H1 (cell line): ENCODE measurements at regions of chrX and their contacts with region 1.

Region 1: DNA sequence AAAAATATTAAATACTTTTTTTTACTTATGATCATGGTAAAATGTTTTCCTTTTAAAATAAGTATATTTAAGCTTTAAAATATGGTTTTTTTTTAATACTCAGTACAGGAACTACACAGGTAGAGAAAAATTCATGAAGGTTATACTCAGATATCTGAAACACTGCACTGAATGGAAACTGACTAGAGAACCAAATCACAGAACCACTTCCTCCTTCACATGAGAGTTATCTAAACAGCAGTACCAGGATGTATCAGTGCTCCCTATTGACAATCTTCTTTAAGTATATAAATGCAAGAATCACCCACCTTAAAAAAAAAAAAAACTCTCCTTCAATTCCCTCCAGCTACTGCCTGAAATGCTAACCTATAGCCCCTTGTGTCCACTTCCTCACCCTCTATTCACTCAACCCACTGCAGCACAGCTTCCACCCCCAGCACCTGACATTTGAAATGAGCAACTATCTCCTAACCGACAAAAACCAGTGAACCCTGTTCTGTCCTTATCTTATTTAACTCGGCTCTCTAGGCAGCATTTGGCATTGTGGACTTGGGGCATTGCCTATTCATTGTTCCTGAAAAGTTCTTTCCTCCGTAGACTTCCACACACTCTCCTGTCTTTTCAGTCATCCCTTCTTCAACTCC is 9.1 kb downstream of the SLC7A3 start:
- DNase-seq: no peak
- H3K4me3 ChIP-seq: peak overlapping the region in 1 of 4 experiments; percentile 32; a peak in 1 of 8 replicates
- H3K27ac ChIP-seq: peak overlapping the region; percentile 54; the same call in 1 of the 2 replicates
- H3K4me1 ChIP-seq: peaks cover 0 to 3% (median 1%) of the 10 kb centered on the region in 4 experiments; a peak in 4 of 7 replicates
- H3K27me3 ChIP-seq: no peaks in the 10 kb centered on the region
- CTCF ChIP-seq: no peak
- EP300 ChIP-seq: no peak
- POLR2A ChIP-seq: no peak
- RAD21 ChIP-seq: no peak

Region 2: DNA sequence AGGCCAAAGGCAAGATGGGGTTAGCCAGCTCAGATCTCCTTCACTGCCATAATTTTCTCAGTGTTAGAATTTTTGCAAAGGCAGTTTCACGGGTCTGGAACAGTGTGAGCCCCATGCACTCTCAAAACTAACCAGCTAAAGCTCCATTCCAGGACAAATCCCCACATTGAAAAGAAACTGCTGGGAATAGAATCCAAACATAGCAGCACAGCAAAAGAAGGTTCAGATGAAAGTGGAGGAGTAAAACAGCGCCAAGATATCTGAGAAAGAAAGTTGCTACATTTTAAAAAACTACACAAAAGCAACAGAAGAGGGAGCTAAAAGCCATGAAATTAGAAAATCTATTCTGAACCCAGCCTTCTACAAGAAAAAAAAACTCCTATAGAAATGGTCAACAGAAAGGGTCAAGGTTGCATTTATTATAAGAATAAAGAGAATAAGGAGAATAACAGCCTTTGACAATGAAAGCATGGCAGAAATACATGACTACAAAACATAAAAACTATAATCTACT is 48.7 kb after region 1 on chrX:
- CTCF ChIA-PET with region 1: interaction called, 5 read pairs
- POLR2A ChIA-PET with region 1: interaction called, 11 read pairs
- DNase-seq: no peak
- H3K4me3 ChIP-seq: peak overlapping the region in 1 of 4 experiments; percentile 50; a peak in 2 of 8 replicates
- H3K27ac ChIP-seq: peak overlapping the region; percentile 50; the same call in 1 of the 2 replicates
- H3K4me1 ChIP-seq: no peaks in the 10 kb centered on the region; a peak in 1 of 7 replicates
- H3K27me3 ChIP-seq: no peaks in the 10 kb centered on the region
- CTCF ChIP-seq: no peak; a peak in 1 of 4 replicates
- EP300 ChIP-seq: no peak
- POLR2A ChIP-seq: no peak
- RAD21 ChIP-seq: peak in 1 of 2 experiments; percentile 21; a peak in 2 of 4 replicates

Region 3: DNA sequence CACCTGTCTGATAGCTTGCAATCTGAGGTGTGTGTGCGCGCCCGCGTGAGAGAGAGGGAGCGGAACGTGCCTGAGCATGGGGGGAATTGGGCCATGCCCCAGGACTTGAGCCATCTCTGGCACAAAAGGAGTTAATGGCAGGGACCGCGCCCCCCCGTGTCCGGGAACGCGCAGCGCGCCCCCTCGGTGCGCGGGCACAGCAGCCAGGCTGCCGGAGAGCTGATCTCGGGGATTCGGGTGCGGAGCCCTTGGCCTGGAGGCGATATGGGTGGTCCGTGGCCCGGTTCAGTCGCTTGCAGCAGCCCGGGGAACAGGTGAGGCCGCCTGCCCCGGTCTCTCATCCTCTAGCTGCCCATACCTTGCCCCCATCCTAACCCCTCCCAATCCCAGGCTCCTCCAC is 222.8 kb after region 1 on chrX and contains the start of gene NLGN3:
- CTCF ChIA-PET with region 1: no interaction called
- POLR2A ChIA-PET with region 1: no interaction called
- DNase-seq: peak in 1 of 2 experiments; percentile 60
- H3K4me3 ChIP-seq: peak within 1 kb of the TSS; percentile 63 to 79 (median 66)
- H3K27ac ChIP-seq: no peak within 1 kb of the TSS
- H3K4me1 ChIP-seq: peaks cover 4 to 17% (median 6%) of the 10 kb centered on the region in 4 experiments
- H3K27me3 ChIP-seq: no peaks in the 10 kb centered on the region
- CTCF ChIP-seq: no peak
- EP300 ChIP-seq: no peak
- POLR2A ChIP-seq: 0 out of 3 replicates have a peak, but pooled peaks of 1 of the 2 experiments have one; percentile 45
- RAD21 ChIP-seq: 0 out of 4 replicates have a peak, but pooled peaks of 1 of the 2 experiments have one; percentile 2
- total RNA-seq, gene NLGN3: 14.8 and 15.3 TPM in 2 replicates